PC-9 (cell line): ENCODE measurements at regions of chr20 and their contacts with region 1.

Region 1: GRCh38 chr20:35680452-35681183 is 15.9 kb upstream of the CPNE1 start:
- DNase-seq: no peak
- H3K4me3 ChIP-seq: no peak overlapping the region
- H3K27ac ChIP-seq: no peak overlapping the region
- H3K4me1 ChIP-seq: no peaks in the 10 kb centered on the region
- H3K27me3 ChIP-seq: no peaks in the 10 kb centered on the region
- CTCF ChIP-seq: no peak

Region 2: DNA sequence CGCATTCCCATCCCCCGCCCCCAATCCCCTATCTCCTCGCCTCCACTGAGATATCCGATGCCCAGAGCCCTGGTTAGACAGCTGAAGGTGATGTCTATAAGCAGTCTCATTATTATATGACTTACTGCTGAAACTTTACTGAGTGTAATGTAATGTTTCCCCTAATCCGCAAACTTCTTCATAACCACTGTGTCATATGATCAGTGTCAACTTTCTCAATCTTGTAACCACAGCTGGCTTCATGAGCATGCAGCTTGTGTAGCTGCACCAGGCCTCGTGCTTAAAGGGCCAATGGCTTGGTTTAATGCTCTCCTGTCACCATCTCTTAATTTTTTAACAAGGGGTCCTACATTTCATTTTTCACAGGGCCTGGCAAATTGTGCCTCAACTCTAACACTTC is 1431.3 kb before region 1 on chr20:
- CTCF ChIA-PET with region 1: no interaction called
- POLR2A ChIA-PET with region 1: no interaction called
- intact Hi-C with region 1: no loop called
- DNase-seq: no peak
- H3K4me3 ChIP-seq: no peak overlapping the region
- H3K27ac ChIP-seq: no peak overlapping the region
- H3K4me1 ChIP-seq: peaks cover 5% of the 10 kb centered on the region; the same call in 1 of the 2 replicates
- H3K27me3 ChIP-seq: no peaks in the 10 kb centered on the region
- CTCF ChIP-seq: no peak

Region 3: DNA sequence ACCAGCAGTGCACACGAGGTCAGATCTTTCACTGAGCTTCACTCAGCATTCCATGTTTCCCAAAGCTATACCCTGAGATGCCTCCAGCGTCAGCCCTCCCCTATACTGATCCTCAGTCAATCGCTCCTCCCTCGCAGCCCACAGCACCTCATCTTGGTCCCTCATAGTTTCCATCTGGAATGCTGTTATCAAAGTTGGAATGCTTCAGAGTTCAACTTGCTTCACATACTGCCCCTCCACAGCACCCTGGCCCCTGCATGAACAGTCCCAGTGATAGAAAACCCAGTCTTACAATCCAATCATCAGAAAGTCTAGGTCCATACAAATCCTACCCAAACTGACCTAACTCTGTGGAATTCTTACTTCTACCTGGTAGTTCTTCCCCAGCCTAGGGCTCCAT is 45.0 kb before region 1 on chr20:
- CTCF ChIA-PET with region 1: no interaction called
- POLR2A ChIA-PET with region 1: no interaction called
- intact Hi-C with region 1: no loop called
- DNase-seq: no peak
- H3K4me3 ChIP-seq: no peak overlapping the region
- H3K27ac ChIP-seq: no peak overlapping the region
- H3K4me1 ChIP-seq: no peaks in the 10 kb centered on the region
- H3K27me3 ChIP-seq: no peaks in the 10 kb centered on the region
- CTCF ChIP-seq: no peak

Region 4: GRCh38 chr20:35929286-35929685 is 248.7 kb after region 1 on chr20:
- CTCF ChIA-PET with region 1: no interaction called
- POLR2A ChIA-PET with region 1: interaction called, 14 read pairs
- intact Hi-C with region 1: no loop called
- DNase-seq: no peak
- H3K4me3 ChIP-seq: no peak overlapping the region
- H3K27ac ChIP-seq: no peak overlapping the region
- H3K4me1 ChIP-seq: no peaks in the 10 kb centered on the region
- H3K27me3 ChIP-seq: no peaks in the 10 kb centered on the region
- CTCF ChIP-seq: no peak